ENCODE measurements at regions of chr1 and their contacts with region 1.

Region 1: DNA sequence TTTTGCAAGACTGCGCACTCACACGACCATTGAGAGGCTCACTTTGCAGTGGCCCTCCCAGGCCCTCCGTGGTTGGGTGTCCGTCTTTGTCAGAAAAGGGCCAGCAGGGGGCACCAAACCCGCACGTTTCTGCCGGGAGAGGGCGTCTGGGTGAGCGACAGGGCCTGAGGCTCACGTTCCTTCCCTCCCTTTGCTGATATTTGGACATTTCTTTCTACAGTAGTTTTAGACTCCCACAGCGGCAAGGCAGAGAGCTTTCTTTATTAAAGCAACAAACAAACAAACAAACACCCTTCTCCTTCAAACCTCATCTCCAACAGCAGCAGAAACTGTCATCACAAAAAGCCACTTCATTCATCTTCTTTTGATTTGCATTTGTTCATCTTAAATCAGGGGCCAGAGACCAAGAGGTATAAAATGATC is 79.2 kb upstream of the WDR26 start:
- DNase-seq: peak; percentile 76 to 90
- ATAC-seq: peak; percentile 99 to 100
- H3K4me3 ChIP-seq: no peak overlapping the region
- H3K27ac ChIP-seq: no peak overlapping the region
- H3K4me1 ChIP-seq: no peaks in the 10 kb centered on the region
- CTCF ChIP-seq: peak; percentile 96
- EP300 ChIP-seq: no peak
- POLR2A ChIP-seq: no peak
- RAD21 ChIP-seq: peak; percentile 94 to 95

Region 2: DNA sequence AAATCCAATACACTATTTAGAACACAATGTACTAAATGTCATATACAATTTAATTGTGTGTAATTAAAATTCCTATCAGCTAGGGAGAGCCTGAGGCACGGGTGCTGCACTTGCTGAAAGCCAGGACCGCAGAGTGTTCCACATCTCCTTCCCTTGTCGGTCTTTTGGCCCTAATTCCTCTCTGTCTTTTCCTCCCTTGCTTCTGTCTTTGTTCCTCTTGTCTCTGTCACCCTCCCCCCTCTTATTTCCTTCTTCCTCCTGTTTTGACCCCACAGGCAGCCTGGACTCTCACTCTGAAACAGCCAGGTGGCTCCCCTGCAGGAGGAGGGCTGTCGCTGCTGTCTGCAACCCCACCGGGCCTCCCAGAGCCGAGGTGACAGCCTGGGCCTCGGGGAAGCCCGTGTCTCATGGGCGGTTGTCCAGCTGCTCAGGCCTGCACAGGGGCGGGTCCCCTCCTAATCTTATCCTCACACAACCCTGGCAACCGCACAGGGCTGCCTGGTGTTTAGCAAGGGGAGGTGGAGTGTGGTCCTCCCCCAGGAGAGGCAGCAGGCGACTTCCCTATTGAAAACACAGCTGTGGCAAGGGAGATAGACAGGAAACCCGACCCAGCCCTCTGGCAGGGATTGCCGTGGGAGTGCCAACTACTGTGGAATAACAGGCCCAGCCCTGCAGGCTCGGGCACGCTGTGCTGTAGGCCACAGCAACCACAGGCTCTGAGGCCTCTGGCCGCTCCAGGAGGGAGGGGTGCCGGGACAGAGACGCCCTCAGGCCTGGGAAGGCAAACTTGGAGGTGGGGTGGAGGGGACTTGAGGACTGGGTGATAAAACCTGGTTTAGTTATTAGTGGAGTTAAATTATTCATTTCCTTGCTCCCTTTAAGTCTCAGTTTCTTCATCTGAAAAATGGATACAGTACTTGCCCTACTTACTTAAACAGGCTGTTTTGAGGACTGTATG is 10.4 kb before region 1 on chr1:
- CTCF ChIA-PET with region 1: interaction called, 41 read pairs
- POLR2A ChIA-PET with region 1: no interaction called
- DNase-seq: peak; percentile 31 to 59
- ATAC-seq: peak; percentile 82 to 83
- H3K4me3 ChIP-seq: no peak overlapping the region
- H3K27ac ChIP-seq: peak overlapping the region; percentile 37 to 72; a peak in 5 of 6 replicates
- H3K4me1 ChIP-seq: peaks cover 13% of the 10 kb centered on the region
- CTCF ChIP-seq: no peak
- EP300 ChIP-seq: no peak
- POLR2A ChIP-seq: no peak
- RAD21 ChIP-seq: no peak

Region 3: GRCh38 chr1:224609333-224609732 is 95.5 kb after region 1 on chr1:
- CTCF ChIA-PET with region 1: interaction called, 12 read pairs
- POLR2A ChIA-PET with region 1: no interaction called
- DNase-seq: no peak
- ATAC-seq: no peak
- H3K4me3 ChIP-seq: no peak overlapping the region
- H3K27ac ChIP-seq: no peak overlapping the region
- H3K4me1 ChIP-seq: no peaks in the 10 kb centered on the region
- CTCF ChIP-seq: no peak
- EP300 ChIP-seq: no peak
- POLR2A ChIP-seq: no peak
- RAD21 ChIP-seq: no peak

Region 4: GRCh38 chr1:224644553-224645154 is 130.9 kb after region 1 on chr1:
- CTCF ChIA-PET with region 1: interaction called, 126 read pairs
- POLR2A ChIA-PET with region 1: no interaction called
- DNase-seq: peak; percentile 65 to 67
- ATAC-seq: peak; percentile 58 to 89
- H3K4me3 ChIP-seq: no peak overlapping the region
- H3K27ac ChIP-seq: no peak overlapping the region
- H3K4me1 ChIP-seq: no peaks in the 10 kb centered on the region
- CTCF ChIP-seq: peak; percentile 76
- EP300 ChIP-seq: no peak
- POLR2A ChIP-seq: no peak
- RAD21 ChIP-seq: peak; percentile 57 to 65

Region 5: DNA sequence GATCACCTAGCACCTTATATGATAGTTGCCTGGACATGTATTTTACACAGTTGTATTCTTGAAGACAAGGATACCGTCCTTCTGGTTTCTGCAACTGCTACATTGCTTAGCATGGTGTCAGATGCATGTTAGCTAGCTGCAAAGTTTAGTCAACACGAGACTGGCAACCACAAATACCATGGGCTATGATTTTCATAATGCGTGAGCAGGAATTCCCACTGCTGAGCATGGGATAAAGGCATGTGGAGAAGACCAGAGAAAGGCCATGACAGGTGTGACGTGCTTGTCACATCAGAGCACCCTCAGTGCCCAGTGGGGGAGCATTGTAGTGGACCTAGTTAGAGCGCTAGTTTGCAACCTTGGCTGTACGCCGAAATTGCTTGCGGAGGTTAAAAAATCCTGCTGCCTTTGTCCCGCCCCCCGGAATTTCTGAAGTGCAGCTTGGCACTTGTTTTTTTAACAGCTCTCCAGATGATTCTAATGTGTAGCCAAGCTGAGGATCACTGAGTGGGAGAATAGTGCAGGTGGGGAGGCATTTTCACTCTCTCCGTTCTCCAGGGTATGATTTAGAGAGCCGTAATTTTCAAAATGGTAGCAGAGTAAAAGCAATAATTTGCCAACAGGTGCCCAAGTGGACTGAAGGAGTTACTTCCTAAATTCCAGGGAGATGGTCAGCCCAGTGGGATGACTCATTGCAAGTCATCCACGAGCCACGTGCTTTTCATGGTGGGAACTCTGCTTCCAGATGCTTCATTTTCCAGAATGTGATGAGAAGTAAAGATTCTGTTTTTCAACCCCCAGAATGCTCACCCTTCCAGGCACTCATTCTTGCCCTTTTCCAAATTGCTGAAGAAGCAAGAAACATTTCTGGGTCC is 183.3 kb after region 1 on chr1:
- CTCF ChIA-PET with region 1: no interaction called
- POLR2A ChIA-PET with region 1: no interaction called
- DNase-seq: no peak
- ATAC-seq: no peak
- H3K4me3 ChIP-seq: no peak overlapping the region
- H3K27ac ChIP-seq: no peak overlapping the region
- H3K4me1 ChIP-seq: no peaks in the 10 kb centered on the region
- CTCF ChIP-seq: no peak
- EP300 ChIP-seq: no peak
- POLR2A ChIP-seq: no peak
- RAD21 ChIP-seq: no peak

Region 6: DNA sequence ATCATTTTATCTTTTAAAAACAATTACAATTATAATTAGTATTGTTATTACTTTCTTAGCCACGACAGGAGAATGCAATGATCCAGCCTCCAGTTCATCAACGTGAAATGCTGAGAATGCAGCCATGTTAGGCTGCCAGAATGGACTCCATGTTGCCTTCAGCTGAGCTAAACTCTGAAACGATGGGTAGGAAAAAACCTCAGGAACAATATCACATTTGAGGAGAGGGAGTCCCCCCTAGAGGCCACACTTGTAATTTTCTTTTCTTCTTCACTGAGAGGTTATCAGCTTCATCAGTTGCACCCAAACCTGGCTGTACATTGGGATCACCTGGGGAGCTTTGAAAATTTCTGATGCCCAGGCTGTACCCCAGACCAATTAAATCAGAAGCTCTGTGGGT is 381.1 kb after region 1 on chr1:
- CTCF ChIA-PET with region 1: interaction called, 40 read pairs
- POLR2A ChIA-PET with region 1: no interaction called
- DNase-seq: peak; percentile 9 to 35
- ATAC-seq: peak in 1 of 2 experiments; percentile 78; a peak in 3 of 6 replicates
- H3K4me3 ChIP-seq: no peak overlapping the region
- H3K27ac ChIP-seq: no peak overlapping the region
- H3K4me1 ChIP-seq: no peaks in the 10 kb centered on the region
- CTCF ChIP-seq: peak; percentile 35; the same call in 1 of the 3 replicates
- EP300 ChIP-seq: no peak
- POLR2A ChIP-seq: no peak
- RAD21 ChIP-seq: peak; percentile 33 to 40; a peak in 4 of 5 replicates

Measured in A549 (cell line).